AG04450 (cell line): ENCODE measurements at regions of chr5 and their contacts with region 1.

Region 1: GRCh38 chr5:142713121-142713706 is 27.3 kb upstream of the FGF1 start:
- DNase-seq: peak; percentile 54
- H3K4me3 ChIP-seq: peak overlapping the region; percentile 72
- H3K27ac ChIP-seq: no peak overlapping the region
- H3K27me3 ChIP-seq: peaks cover 2% of the 10 kb centered on the region
- CTCF ChIP-seq: peak; percentile 79

Region 2: DNA sequence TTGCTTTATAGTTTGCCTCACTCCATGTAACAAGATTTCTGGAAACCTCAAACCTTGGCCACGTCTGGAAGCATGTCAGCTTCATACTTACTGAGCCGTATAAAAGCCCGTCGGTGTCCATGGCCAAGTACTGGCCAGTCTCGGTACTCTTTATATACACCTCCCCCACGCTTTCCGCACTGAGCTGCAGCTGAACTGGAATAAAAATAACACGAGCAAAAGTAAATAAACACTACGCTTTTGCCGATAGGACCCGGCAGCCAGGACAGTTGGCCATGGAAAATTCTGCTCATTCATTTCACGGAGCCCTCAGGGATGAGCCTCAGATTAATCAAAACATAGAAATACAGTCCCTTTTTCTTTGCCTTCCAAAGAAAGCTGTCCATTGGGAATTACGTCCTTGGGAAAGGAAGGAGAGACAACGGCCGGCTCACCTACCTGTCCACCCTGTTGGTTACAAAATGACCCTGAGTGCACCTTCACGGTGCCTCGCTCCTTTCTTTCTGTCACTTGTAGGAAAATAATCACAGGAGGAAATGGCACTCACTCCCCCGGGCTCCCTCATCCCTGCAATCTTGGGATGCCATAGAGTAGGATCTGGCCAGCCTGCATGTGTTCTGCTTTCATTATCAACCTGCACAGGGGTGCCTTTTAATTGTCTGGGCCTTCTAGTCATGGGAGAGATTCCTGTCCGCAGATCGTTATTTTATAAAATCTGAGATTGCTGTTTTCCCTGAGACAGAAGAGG is 112.4 kb before region 1 on chr5:
- CTCF ChIA-PET with region 1: interaction called, 19 read pairs
- POLR2A ChIA-PET with region 1: no interaction called
- DNase-seq: peak; percentile 69
- H3K4me3 ChIP-seq: peak overlapping the region; percentile 41
- H3K27ac ChIP-seq: peak overlapping the region; percentile 72
- H3K27me3 ChIP-seq: no peaks in the 10 kb centered on the region
- CTCF ChIP-seq: no peak

Region 3: DNA sequence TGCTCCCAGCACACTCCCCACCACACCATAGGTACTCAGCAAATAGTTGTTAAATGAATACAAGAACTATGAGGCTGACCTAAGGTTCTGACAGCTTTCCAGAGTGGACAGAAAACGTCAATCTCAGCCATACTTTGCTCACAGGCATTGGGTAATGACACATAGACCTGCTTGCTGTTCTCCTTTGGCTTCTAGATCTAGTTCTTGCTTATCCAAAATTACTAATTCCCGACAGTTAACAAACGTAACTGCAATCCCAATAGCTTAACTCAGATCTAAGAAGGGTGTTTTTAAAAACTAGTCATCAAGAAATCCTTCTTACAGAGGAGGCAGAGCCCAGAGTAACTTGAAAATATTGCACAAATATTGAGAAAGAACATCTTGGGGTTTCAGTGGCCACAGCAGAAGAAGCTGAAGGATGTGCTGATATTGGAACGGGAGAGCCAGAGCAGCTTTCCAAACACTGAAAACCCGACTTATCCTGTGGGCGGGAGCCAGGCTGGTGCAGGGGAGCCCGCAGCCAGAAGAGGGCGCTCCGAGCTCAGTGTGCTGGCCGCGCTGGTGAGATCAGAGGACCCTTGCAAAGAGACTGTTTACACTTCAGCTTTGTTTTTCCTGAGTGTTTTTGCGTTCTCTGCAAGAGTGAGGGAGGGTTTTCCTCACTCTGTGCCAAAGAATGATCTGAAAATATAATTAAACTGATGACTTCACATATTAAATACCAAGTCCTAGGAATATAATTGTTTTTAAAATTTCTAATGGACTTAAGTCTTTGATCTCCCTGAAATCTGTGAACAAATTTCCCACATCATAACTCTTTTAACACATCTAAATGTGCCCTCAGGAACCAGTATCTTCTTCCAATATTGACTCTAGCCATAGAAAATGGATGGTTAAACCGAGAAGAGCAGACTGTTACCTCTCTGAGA is 57.6 kb before region 1 on chr5:
- CTCF ChIA-PET with region 1: interaction called, 76 read pairs
- POLR2A ChIA-PET with region 1: no interaction called
- DNase-seq: peak; percentile 72
- H3K4me3 ChIP-seq: no peak overlapping the region
- H3K27ac ChIP-seq: no peak overlapping the region
- H3K27me3 ChIP-seq: no peaks in the 10 kb centered on the region
- CTCF ChIP-seq: peak; percentile 99

Region 4: GRCh38 chr5:142699184-142699720 is 14.0 kb before region 1 on chr5:
- CTCF ChIA-PET with region 1: interaction called, 69 read pairs
- POLR2A ChIA-PET with region 1: no interaction called
- DNase-seq: peak; percentile 76
- H3K4me3 ChIP-seq: no peak overlapping the region
- H3K27ac ChIP-seq: no peak overlapping the region
- H3K27me3 ChIP-seq: no peaks in the 10 kb centered on the region
- CTCF ChIP-seq: peak; percentile 97

Region 5: GRCh38 chr5:142783601-142784341 is 70.6 kb after region 1 on chr5:
- CTCF ChIA-PET with region 1: interaction called, 30 read pairs
- POLR2A ChIA-PET with region 1: no interaction called
- DNase-seq: no peak
- H3K4me3 ChIP-seq: no peak overlapping the region
- H3K27ac ChIP-seq: no peak overlapping the region
- H3K27me3 ChIP-seq: peaks cover 24% of the 10 kb centered on the region
- CTCF ChIP-seq: no peak

Region 6: GRCh38 chr5:142839711-142840406 is 126.6 kb after region 1 on chr5:
- CTCF ChIA-PET with region 1: interaction called, 11 read pairs
- POLR2A ChIA-PET with region 1: no interaction called
- DNase-seq: no peak
- H3K4me3 ChIP-seq: no peak overlapping the region
- H3K27ac ChIP-seq: peak overlapping the region; percentile 11
- H3K27me3 ChIP-seq: peaks cover 14% of the 10 kb centered on the region
- CTCF ChIP-seq: no peak

Region 7: DNA sequence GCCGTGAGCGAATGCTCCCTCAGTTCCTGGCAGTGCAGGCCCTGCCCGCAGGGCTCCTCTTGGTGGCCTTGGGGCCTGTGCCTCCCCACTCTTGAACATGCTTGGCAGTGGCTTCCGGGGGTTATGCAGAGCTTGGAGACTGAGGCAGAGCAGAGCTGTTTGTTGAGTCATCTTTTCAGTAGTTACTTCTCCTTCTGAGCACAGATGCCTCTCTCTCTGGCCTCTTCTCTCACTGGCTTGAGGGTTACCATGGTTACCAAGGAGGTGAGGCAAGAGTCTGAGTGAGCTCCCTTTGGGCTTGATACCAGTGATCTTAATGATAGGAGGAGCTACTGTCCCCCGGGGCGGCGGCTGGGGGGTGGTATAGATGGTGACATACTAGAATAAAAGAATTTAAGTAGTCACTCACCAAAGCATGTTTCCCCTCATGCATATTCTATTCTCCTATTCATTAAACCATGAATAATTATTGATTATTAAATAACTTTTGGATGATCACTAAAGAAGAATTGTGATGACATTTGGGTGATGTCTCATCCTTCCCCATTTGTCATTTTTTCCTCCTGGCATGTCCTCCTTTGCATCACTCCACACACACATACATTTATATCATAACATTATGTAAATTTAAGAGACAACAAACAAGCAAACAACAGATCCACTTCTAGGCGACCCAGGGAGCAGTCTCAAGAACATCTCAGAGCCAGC is 168.0 kb after region 1 on chr5:
- CTCF ChIA-PET with region 1: interaction called, 1,004 read pairs
- POLR2A ChIA-PET with region 1: no interaction called
- DNase-seq: peak; percentile 65
- H3K4me3 ChIP-seq: no peak overlapping the region
- H3K27ac ChIP-seq: no peak overlapping the region
- H3K27me3 ChIP-seq: peaks cover 4% of the 10 kb centered on the region
- CTCF ChIP-seq: no peak

Region 8: GRCh38 chr5:143074414-143074996 is 361.3 kb after region 1 on chr5:
- CTCF ChIA-PET with region 1: no interaction called
- POLR2A ChIA-PET with region 1: no interaction called
- DNase-seq: no peak
- H3K4me3 ChIP-seq: no peak overlapping the region
- H3K27ac ChIP-seq: peak overlapping the region; percentile 60
- H3K27me3 ChIP-seq: no peaks in the 10 kb centered on the region
- CTCF ChIP-seq: no peak